ENCODE measurements at regions of chr3 and their contacts with region 1.

Region 1: DNA sequence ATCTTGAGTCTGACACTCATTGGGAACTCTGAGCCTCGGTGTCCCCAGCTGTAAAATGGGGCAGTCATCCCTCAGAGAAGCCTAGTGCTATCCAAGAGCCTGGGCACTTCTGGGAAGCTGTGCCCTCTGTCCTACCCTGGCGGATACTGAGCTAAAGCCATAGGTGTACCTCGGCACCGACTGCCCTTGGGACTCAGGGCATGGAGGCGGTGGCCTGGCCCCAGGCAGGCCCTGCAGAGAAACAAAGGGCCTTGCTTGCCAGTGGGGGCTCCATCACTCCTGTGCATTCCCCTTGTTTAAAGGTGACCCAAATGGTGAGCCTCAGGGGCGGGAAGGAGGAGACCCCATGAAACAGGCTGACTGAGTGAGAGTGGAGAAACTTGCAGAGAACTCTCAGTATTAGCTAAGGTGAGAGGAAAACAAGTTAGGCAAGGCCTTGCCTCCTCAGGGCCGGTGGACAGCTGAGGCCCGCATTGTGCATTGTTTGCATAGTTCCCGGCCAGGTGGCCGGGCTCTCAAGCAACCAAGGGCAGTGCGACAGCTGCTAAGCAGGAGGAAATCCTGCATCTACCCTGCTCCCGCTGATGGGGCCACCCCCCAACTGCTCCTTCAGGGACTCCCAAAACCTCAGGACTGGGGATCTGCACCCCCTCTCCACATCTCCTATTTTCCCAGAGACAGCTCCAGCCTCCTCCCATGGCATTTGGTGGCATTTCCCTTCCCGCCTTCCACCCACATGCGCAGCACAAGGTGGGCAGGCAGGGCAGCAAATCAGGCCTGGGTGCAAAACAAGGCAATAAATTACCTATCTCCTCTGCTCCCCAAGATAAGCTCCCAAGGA is 4.3 kb downstream of the PFKFB4 start:
- DNase-seq: peak; percentile 67 to 81
- H3K4me3 ChIP-seq: no peak overlapping the region
- H3K27ac ChIP-seq: peak overlapping the region in 4 of 5 donors; percentile 13 to 43 (median 32)
- H3K4me1 ChIP-seq: peaks cover 17 to 41% (median 25%) of the 10 kb centered on the region in 4 donors
- H3K27me3 ChIP-seq: no peaks in the 10 kb centered on the region
- CTCF ChIP-seq: no peak
- EP300 ChIP-seq: no peak
- POLR2A ChIP-seq: no peak

Region 2: DNA sequence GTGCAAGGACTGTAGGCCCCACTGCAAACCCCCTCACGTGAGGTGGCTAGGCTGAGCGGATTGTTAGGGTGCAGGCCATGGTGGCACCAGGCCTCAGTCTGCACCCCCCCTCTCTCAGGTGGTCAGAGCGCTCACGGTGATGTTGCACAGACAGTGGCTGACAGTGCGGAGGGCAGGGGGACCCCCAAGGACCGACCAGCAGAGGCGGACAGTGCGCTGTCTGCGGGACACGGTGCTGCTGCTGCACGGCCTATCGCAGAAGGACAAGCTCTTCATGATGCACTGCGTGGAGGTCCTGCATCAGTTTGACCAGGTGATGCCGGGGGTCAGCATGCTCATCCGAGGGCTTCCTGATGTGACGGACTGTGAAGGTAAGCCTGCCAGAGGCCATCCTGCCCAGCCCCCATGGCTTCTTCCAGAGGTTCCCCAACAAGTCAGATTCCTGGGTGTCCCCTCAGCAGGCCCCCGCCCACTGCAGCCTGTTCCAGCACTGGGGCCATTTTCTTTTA is 87.6 kb before region 1 on chr3:
- intact Hi-C with region 1: loop called (anchors 5 kb)
- DNase-seq: no peak
- H3K4me3 ChIP-seq: no peak overlapping the region
- H3K27ac ChIP-seq: peak overlapping the region; percentile 97 to 100 (median 100)
- H3K4me1 ChIP-seq: peaks cover 36 to 54% (median 49%) of the 10 kb centered on the region in 4 donors
- H3K27me3 ChIP-seq: no peaks in the 10 kb centered on the region
- CTCF ChIP-seq: no peak
- EP300 ChIP-seq: no peak
- POLR2A ChIP-seq: no peak

Measured in stomach (tissue), 19 donors.